Activated naive CD4-positive, alpha-beta T cell treated with anti-CD3 and anti-CD28 coated beads for 36 hours (primary cell): ENCODE measurements at regions of chr1 and their contacts with region 1.

Region 1: DNA sequence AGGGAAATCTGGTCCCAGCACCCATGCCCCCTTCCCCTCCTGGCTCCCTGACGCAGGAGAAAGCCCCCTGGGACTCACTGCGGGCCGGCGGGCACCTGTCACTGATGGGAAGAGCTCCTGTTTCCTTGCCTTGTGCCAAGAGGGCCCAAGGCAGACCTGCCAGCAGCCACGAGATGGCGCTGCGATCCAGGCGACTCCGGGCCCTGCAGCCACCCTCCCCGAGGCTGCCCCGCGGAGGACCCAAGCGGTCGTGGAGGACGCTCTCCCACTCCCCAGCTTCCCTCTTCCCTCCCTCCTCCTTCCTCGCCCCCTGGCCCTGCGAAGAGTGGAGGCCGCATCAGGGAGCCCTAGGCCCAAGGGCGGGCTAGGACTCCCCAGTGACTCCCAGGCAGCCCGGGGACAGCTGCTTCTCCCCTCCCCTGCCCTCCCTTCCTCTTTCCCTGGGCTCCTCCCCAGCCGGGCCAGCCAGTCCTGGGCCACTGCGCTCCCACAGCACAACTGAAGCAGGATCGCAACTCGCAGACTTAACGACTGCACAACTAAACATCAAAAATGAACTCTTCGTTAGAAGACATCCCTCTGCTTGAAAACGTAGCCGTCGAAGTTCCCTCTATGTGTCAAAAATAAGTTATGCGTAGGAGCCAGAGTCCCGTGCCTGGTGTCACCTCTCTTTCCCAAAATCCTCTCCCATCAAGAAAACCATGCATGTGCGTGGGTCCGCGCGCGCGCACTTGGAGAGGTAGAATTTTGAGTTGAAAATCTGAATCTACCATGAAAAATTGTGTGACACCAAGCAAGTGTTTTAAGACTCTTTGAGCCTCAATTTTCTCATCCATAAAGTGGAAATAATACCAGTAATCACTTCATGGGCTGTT is 34.2 kb downstream of the BATF3 start:
- DNase-seq: peak; percentile 84
- H3K4me3 Mint-ChIP-seq: peak overlapping the region; percentile 70
- H3K27ac Mint-ChIP-seq: peak overlapping the region; percentile 56
- H3K4me1 Mint-ChIP-seq: peaks cover 5% of the 10 kb centered on the region
- H3K27me3 Mint-ChIP-seq: peaks cover 9% of the 10 kb centered on the region

Region 2: DNA sequence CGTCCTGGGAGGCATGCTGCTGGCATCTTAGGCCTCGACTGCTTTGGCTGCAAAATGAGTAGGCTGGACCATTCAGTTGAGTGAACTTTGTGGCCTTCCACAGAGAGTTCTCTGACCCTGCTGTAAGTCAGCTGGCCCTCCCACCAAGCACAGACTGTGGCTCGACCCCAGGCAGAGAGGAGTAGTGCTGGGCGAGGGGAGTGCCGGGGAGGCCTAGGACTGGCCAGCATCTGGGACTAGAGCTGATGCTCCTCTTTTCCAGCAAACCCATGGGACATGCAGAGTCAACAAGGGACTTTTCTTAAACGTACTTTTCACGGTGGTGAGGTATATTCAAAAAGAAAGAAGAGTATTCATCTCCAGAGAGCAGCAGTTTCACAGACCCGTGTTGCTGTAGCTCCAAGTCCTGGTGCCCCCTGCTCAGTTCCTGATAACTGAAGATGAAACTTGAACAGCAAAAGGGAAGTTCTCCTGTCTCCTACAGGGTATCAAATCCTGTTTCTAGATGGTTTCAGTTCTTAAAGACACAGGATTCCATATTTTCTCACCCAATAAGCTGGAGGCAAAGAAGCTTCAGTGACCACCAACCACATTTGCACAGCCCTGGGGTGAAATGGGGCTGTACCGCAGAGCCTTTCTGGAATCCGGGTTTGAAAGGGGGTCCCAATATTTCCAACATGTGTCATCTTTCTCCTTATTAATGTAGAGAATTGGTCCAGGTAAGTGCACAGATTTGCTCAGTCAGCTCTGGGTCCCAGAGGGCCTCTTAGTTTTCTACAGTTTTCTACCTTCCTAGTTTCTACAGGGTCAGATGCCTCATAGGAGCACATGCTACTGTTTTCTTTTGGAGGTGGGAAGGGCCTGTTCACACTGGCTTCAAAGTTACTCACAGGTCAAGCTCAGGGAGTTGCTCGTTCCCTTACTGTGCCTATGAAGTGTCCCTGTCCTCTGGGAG is 13.3 kb after region 1 on chr1:
- CTCF ChIA-PET with region 1: interaction called, 18 read pairs
- intact Hi-C with region 1: no loop called
- DNase-seq: peak; percentile 50
- H3K4me3 Mint-ChIP-seq: no peak overlapping the region
- H3K27ac Mint-ChIP-seq: no peak overlapping the region
- H3K4me1 Mint-ChIP-seq: peaks cover 30% of the 10 kb centered on the region
- H3K27me3 Mint-ChIP-seq: peaks cover 3% of the 10 kb centered on the region

Region 3: GRCh38 chr1:212760126-212760823 is 94.8 kb after region 1 on chr1:
- CTCF ChIA-PET with region 1: interaction called, 15 read pairs
- intact Hi-C with region 1: loop called (anchors 1 kb)
- DNase-seq: peak; percentile 75
- H3K4me3 Mint-ChIP-seq: no peak overlapping the region
- H3K27ac Mint-ChIP-seq: no peak overlapping the region
- H3K4me1 Mint-ChIP-seq: peaks cover 13% of the 10 kb centered on the region
- H3K27me3 Mint-ChIP-seq: no peaks in the 10 kb centered on the region

Region 4: GRCh38 chr1:212782422-212783154 is 117.1 kb after region 1 on chr1:
- CTCF ChIA-PET with region 1: interaction called, 35 read pairs
- intact Hi-C with region 1: loop called (anchors 1 kb)
- DNase-seq: peak; percentile 13
- H3K4me3 Mint-ChIP-seq: no peak overlapping the region
- H3K27ac Mint-ChIP-seq: no peak overlapping the region
- H3K4me1 Mint-ChIP-seq: peaks cover 13% of the 10 kb centered on the region
- H3K27me3 Mint-ChIP-seq: no peaks in the 10 kb centered on the region

Region 5: GRCh38 chr1:212994926-212995325 is 329.4 kb after region 1 on chr1:
- CTCF ChIA-PET with region 1: interaction called, 29 read pairs
- intact Hi-C with region 1: loop called (anchors 1 kb)
- DNase-seq: no peak
- H3K4me3 Mint-ChIP-seq: no peak overlapping the region
- H3K27ac Mint-ChIP-seq: no peak overlapping the region
- H3K4me1 Mint-ChIP-seq: peaks cover 4% of the 10 kb centered on the region
- H3K27me3 Mint-ChIP-seq: no peaks in the 10 kb centered on the region

Region 6: GRCh38 chr1:213244664-213245091 is 579.2 kb after region 1 on chr1:
- CTCF ChIA-PET with region 1: no interaction called
- intact Hi-C with region 1: no loop called
- DNase-seq: peak; percentile 29
- H3K4me3 Mint-ChIP-seq: no peak overlapping the region
- H3K27ac Mint-ChIP-seq: no peak overlapping the region
- H3K4me1 Mint-ChIP-seq: no peaks in the 10 kb centered on the region
- H3K27me3 Mint-ChIP-seq: no peaks in the 10 kb centered on the region